ENCODE measurements at regions of chr10 and their contacts with region 1.

Region 1: GRCh38 chr10:114631666-114632417 is 26.2 kb downstream of the ABLIM1 start:
- DNase-seq: peak; percentile 60
- H3K4me3 ChIP-seq: peak overlapping the region; percentile 56 to 75 (median 71)
- H3K27ac ChIP-seq: no peak overlapping the region
- H3K4me1 ChIP-seq: peaks cover 39% of the 10 kb centered on the region
- H3K27me3 ChIP-seq: no peaks in the 10 kb centered on the region
- CTCF ChIP-seq: no peak
- POLR2A ChIP-seq: no peak

Region 2: GRCh38 chr10:114442136-114442535 is 189.7 kb before region 1 on chr10:
- CTCF ChIA-PET with region 1: no interaction called
- POLR2A ChIA-PET with region 1: no interaction called
- dilution Hi-C with region 1: no loop called
- intact Hi-C with region 1: no loop called
- DNase-seq: no peak
- H3K4me3 ChIP-seq: no peak overlapping the region
- H3K27ac ChIP-seq: no peak overlapping the region
- H3K4me1 ChIP-seq: peaks cover 13% of the 10 kb centered on the region
- H3K27me3 ChIP-seq: no peaks in the 10 kb centered on the region
- CTCF ChIP-seq: no peak
- POLR2A ChIP-seq: no peak

Region 3: GRCh38 chr10:114645729-114646128 is 13.9 kb after region 1 on chr10:
- CTCF ChIA-PET with region 1: interaction called, 5 read pairs
- POLR2A ChIA-PET with region 1: no interaction called
- dilution Hi-C with region 1: no loop called
- intact Hi-C with region 1: loop called (anchors 1 kb)
- DNase-seq: peak; percentile 71
- H3K4me3 ChIP-seq: no peak overlapping the region
- H3K27ac ChIP-seq: peak overlapping the region; percentile 21
- H3K4me1 ChIP-seq: peaks cover 55% of the 10 kb centered on the region
- H3K27me3 ChIP-seq: no peaks in the 10 kb centered on the region
- CTCF ChIP-seq: no peak
- POLR2A ChIP-seq: no peak

Region 4: DNA sequence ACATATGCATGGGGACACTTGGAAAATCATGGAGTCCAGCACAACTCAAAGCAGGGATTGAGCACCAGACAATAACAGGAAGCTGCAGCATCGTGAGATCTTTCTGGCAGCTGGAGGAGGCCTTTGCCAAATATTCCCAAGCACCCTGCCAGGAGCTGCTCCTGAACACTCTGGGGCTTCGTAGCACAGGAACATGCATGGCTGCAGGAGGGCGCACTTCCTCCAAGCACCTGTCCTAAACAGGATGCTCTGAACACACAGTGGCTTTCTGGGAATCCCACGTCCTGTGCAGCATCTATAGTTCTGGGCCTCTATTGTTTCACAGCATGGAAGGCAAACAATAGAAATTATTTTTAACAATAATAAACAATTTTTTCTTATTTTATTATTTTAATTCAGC is 22.1 kb after region 1 on chr10:
- CTCF ChIA-PET with region 1: interaction called, 4 read pairs
- POLR2A ChIA-PET with region 1: no interaction called
- dilution Hi-C with region 1: no loop called
- intact Hi-C with region 1: loop called (anchors 1 kb)
- DNase-seq: peak; percentile 90
- H3K4me3 ChIP-seq: no peak overlapping the region
- H3K27ac ChIP-seq: peak overlapping the region; percentile 82
- H3K4me1 ChIP-seq: peaks cover 64% of the 10 kb centered on the region
- H3K27me3 ChIP-seq: no peaks in the 10 kb centered on the region
- CTCF ChIP-seq: no peak
- POLR2A ChIP-seq: no peak

Region 5: DNA sequence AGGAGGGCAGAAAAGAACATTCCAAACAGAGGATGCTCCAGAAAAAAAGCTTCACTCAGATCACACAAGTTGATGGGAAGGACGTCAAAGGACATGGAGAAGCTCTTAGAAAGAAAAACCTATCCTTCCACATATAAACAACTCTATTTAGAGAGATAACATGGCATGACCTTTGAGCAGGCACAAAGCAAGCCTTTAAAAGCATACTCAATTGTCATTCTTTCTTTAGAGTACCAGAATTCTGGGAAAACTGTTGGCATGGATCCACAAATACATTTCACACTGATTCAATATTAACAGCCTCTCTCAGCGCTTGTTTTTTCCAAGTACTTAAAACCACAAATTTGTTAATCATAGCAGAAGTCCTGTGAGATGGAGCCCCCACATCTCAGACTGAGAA is 33.6 kb after region 1 on chr10:
- CTCF ChIA-PET with region 1: no interaction called
- POLR2A ChIA-PET with region 1: no interaction called
- dilution Hi-C with region 1: no loop called
- intact Hi-C with region 1: no loop called
- DNase-seq: peak; percentile 64
- H3K4me3 ChIP-seq: no peak overlapping the region
- H3K27ac ChIP-seq: no peak overlapping the region
- H3K4me1 ChIP-seq: peaks cover 7% of the 10 kb centered on the region
- H3K27me3 ChIP-seq: no peaks in the 10 kb centered on the region
- CTCF ChIP-seq: no peak
- POLR2A ChIP-seq: no peak

Region 6: GRCh38 chr10:114714281-114714741 is 82.5 kb after region 1 on chr10:
- CTCF ChIA-PET with region 1: no interaction called
- POLR2A ChIA-PET with region 1: no interaction called
- dilution Hi-C with region 1: no loop called
- intact Hi-C with region 1: no loop called
- DNase-seq: peak; percentile 93
- H3K4me3 ChIP-seq: no peak overlapping the region
- H3K27ac ChIP-seq: peak overlapping the region; percentile 58
- H3K4me1 ChIP-seq: peaks cover 37% of the 10 kb centered on the region
- H3K27me3 ChIP-seq: no peaks in the 10 kb centered on the region
- CTCF ChIP-seq: no peak
- POLR2A ChIP-seq: no peak

Measured in endothelial cell of umbilical vein (primary cell).